GM12878 (cell line): ENCODE measurements at regions of chr12 and their contacts with region 1.

Region 1: DNA sequence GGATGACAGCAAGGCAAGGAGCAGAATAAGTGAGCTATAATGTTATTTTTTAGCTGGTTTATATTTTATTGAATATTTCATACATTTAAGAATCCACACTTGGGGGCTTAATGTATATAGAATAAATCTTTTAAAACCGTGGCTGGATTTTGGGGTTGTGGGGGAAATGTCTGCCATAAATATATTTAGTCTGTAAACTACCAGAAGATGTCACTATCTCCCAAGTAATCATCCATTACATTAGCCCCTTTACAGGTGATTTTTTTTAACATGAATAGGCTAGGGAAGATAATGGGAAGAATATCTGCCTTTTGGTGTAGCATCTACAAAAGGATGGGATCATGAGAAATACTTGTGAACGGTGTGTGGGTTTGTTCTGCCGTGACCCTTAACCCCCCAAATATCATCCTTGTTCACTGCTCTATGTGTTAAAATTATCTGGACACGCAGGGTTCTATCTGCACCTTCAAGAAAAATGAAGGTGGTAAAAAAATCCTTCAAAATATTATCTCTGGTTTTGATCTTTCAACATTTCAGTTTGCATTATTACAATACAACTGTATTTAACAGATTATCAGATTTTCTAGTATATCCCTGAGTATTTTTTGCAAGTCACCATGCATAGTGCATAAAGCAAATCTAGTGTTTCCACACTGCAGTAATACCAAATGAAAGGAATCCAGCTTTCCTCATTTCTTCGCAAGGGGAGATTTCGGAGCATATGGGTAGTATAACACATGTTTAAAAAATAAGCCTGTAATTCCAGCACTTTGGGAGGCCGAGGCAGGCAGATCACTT is 8.0 kb upstream of the SLC17A8 start:
- DNase-seq: no peak
- ATAC-seq: peak; percentile 58; the same call in 2 of the 3 replicates
- H3K4me3 ChIP-seq: no peak overlapping the region
- H3K27ac ChIP-seq: no peak overlapping the region
- H3K4me1 ChIP-seq: no peaks in the 10 kb centered on the region
- H3K27me3 ChIP-seq: no peaks in the 10 kb centered on the region
- CTCF ChIP-seq: peak in 2 of 3 experiments; percentile 8 to 48; a peak in 2 of 6 replicates
- EP300 ChIP-seq: no peak
- POLR2A ChIP-seq: no peak
- RAD21 ChIP-seq: peak; percentile 59

Region 2: GRCh38 chr12:100234598-100235304 is 114.1 kb before region 1 on chr12:
- CTCF ChIA-PET with region 1: interaction called, 11 read pairs
- POLR2A ChIA-PET with region 1: no interaction called
- RAD21 ChIA-PET with region 1: interaction called, 3 read pairs
- SMC1A ChIA-PET with region 1: interaction called, 3 read pairs
- in situ Hi-C with region 1: no loop called
- intact Hi-C with region 1: no loop called
- DNase-seq: peak; percentile 1
- ATAC-seq: peak; percentile 70
- H3K4me3 ChIP-seq: no peak overlapping the region
- H3K27ac ChIP-seq: no peak overlapping the region
- H3K4me1 ChIP-seq: no peaks in the 10 kb centered on the region
- H3K27me3 ChIP-seq: no peaks in the 10 kb centered on the region
- CTCF ChIP-seq: peak; percentile 71 to 84 (median 75)
- EP300 ChIP-seq: no peak
- POLR2A ChIP-seq: no peak
- RAD21 ChIP-seq: peak; percentile 88

Region 3: DNA sequence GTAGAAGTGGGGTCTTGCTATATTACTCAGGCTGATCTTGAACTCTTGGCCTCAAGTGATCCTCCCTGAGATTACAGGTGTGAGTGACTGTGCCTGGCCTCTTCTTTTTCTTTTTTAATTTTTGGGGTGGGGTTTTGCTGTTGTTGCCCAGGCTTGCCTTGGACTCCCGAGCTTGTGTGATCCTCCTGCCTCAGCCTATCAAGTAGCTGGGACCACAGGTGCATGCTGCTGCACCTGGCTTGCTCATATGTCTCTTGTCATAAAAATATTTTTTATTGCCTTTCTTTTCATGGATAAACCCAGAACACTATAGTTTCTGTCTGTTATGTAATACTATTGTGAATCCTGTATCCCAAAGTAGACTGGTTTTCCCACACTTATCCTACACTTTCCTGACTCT is 55.8 kb before region 1 on chr12:
- CTCF ChIA-PET with region 1: no interaction called
- POLR2A ChIA-PET with region 1: no interaction called
- RAD21 ChIA-PET with region 1: no interaction called
- SMC1A ChIA-PET with region 1: no interaction called
- in situ Hi-C with region 1: no loop called
- intact Hi-C with region 1: no loop called
- DNase-seq: no peak
- ATAC-seq: no peak
- H3K4me3 ChIP-seq: no peak overlapping the region
- H3K27ac ChIP-seq: no peak overlapping the region
- H3K4me1 ChIP-seq: no peaks in the 10 kb centered on the region
- H3K27me3 ChIP-seq: no peaks in the 10 kb centered on the region
- CTCF ChIP-seq: no peak
- EP300 ChIP-seq: no peak
- POLR2A ChIP-seq: no peak
- RAD21 ChIP-seq: no peak